ENCODE measurements at regions of chr10 and their contacts with region 1.

Region 1: DNA sequence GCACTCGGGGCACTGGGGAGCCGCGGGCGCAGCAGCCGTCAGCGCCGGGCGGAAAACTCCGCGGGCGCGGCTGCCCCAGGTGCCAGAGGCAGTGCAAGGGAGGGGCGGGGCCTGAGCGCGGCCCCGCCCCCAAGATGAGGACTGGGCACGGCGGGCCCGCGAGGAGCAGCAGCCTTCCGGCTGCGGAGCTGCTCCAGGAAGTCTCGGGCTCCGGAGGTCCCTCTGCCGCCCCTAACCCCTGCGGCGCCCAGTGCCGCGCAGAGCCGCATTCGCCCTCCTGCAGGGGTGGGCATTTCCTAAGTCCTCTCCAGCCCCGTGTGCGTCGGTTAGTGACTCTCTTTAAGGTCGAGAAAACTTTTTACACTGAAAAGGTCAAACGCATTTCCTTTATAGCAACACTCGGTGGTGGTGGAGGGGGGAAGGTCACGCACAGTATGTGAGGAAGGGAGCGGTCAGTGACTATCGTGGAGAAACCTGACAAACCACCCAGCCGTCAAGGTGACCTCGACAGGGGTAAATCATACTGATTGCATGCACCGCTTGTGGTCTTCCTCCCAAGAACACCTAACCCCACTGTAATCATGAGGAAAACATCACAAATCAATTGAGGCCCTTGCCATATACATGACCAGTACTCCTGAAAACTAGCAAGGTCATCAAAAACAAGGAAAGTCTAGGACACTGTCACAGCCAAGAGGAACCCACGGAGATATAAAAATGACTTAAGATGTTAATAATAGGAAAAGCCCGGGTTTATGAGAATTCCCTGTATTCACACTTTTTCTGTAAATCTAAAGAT is at the start of gene ANXA11:
- DNase-seq: peak; percentile 87
- ATAC-seq: peak; percentile 83 to 85
- total RNA-seq, gene ANXA11: 327 to 413 TPM

Region 2: DNA sequence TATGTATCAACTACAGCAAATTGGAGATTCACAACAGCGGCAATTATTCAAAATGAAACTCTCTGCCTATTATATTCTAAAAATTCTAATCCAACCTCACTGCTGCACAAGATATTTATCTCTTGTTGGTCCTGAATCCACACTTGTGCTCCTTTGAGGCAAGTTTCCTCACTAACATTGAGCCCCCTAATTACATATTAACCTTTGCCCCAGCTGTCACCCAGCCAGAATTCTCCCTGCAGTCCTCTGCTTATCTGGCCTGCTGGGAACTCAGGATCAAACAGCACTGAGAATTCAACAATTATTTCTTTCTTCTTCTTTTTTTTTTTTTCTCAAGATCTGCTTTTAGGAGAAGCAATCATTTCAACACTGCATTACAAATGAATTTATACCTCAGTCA is 94.7 kb before region 1 on chr10:
- intact Hi-C with region 1: no loop called
- DNase-seq: no peak
- ATAC-seq: no peak

Region 3: DNA sequence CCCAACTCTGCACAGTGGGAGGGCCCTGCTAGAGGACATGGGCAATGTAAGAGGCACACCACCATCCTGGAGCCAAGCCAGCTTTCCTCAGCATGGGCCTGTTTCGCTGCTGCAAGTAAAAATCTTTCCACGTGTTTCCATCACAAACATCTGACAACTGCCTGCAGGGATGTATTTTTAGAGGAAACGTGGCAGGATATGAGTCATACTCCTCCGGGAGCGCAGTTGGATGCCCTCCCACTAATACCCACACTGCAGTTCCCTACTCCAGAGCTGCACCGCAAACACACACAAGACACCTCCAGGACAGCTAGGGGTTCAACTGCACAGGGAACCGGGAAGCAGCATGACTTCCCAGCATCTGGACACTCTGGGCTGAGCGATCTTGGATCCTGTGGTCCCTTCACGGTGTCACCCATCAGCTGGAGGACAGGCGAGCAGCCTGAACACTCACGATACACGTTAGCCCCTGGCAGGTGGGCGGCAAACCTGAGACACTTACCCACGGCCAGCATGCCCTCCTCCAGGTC is 47.0 kb before region 1 on chr10:
- intact Hi-C with region 1: loop called (anchors 5 kb)
- DNase-seq: peak; percentile 93
- ATAC-seq: peak; percentile 93 to 95